Endothelial cell of umbilical vein (primary cell): ENCODE measurements at regions of chr9 and their contacts with region 1.

Region 1: DNA sequence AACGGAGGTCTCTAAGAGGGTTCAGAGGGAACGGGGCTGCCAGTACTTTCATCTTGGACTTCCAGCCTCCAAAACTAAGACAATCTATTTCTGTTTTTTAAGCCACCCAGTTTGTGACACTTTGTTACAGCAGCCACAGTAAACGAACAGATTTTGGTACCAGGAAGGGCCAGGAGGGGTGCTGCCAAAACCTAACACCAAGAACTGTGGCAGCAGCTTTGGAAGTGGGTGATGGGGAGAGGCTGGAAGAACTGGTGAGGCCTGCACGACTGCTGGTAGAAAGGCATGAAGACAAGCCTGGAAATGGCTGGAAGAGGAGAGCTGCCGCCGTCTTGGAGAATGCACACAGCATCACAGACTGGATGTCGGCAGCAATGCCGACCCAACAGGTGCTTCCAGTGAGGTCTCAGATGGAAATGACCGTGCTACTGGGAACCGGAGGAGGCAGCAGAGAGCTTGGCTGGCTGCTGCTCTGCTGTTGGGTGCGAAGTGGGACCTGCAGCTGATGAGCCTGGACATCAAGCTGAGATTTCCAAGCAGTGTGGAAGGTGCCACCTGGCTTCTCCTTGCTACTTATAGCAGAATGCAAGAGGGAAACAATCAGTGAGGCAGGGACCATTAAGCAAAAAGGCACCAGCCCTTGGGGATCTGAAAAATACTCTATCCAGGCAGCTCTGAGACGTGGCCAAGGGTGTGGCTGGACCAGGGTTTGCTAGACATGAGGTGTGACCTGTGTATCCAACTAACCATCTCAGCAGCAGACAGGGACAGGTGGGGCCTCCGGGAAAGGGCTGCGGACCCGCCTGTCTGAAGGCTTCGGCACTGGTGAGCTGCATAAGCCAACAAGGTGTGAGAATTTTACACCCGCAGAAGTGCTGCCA is 4.7 kb upstream of the TMEM210 start:
- DNase-seq: peak; percentile 20
- H3K4me3 ChIP-seq: no peak overlapping the region
- H3K27ac ChIP-seq: no peak overlapping the region
- H3K4me1 ChIP-seq: peaks cover 6% of the 10 kb centered on the region
- H3K27me3 ChIP-seq: no peaks in the 10 kb centered on the region
- CTCF ChIP-seq: peak; percentile 48 to 66
- POLR2A ChIP-seq: no peak

Region 2: GRCh38 chr9:137114610-137115391 is 61.7 kb before region 1 on chr9 and contains the start of gene DPP7:
- CTCF ChIA-PET with region 1: no interaction called
- POLR2A ChIA-PET with region 1: no interaction called
- dilution Hi-C with region 1: no loop called
- intact Hi-C with region 1: loop called (anchors 5 kb)
- DNase-seq: peak; percentile 33
- H3K4me3 ChIP-seq: peak within 1 kb of the TSS; percentile 32 to 61 (median 53)
- H3K27ac ChIP-seq: no peak within 1 kb of the TSS
- H3K4me1 ChIP-seq: peaks cover 4% of the 10 kb centered on the region
- H3K27me3 ChIP-seq: no peaks in the 10 kb centered on the region
- CTCF ChIP-seq: no peak
- POLR2A ChIP-seq: peak; percentile 35
- total RNA-seq, gene DPP7: 118 and 149 TPM in 2 replicates

Region 3: DNA sequence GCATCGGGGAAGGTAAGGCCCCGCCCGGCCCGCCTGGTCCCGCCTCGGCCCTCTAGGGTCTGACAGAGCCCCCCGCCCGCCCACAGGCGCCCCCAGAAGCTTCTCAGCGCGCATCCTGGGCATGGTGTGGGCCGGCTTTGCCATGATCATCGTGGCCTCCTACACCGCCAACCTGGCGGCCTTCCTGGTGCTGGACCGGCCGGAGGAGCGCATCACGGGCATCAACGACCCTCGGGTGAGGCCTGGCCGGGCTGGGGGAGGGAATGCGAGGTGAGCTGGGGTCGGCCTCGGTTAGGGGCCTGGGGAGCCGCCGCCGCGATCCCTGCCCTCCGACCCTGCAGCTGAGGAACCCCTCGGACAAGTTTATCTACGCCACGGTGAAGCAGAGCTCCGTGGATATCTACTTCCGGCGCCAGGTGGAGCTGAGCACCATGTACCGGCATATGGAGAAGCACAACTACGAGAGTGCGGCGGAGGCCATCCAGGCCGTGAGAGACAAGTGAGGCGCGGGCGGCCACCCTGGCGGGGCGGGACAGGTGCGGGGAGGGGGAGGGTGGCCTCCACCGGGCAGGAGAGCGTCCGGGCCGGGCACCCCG is 13.9 kb before region 1 on chr9:
- CTCF ChIA-PET with region 1: interaction called, 12 read pairs
- POLR2A ChIA-PET with region 1: no interaction called
- dilution Hi-C with region 1: no loop called
- intact Hi-C with region 1: no loop called
- DNase-seq: no peak
- H3K4me3 ChIP-seq: no peak overlapping the region
- H3K27ac ChIP-seq: no peak overlapping the region
- H3K4me1 ChIP-seq: peaks cover 3% of the 10 kb centered on the region
- H3K27me3 ChIP-seq: peaks cover 21 to 32% of the 10 kb centered on the region in 2 experiments
- CTCF ChIP-seq: no peak
- POLR2A ChIP-seq: no peak

Region 4: GRCh38 chr9:137188490-137189296 is 12.2 kb after region 1 on chr9 and contains the starts of genes ANAPC2 and SSNA1:
- CTCF ChIA-PET with region 1: interaction called, 13 read pairs
- POLR2A ChIA-PET with region 1: no interaction called
- dilution Hi-C with region 1: no loop called
- intact Hi-C with region 1: no loop called
- DNase-seq: peak; percentile 95
- H3K4me3 ChIP-seq: peak within 1 kb of the TSS; percentile 57 to 86 (median 64)
- H3K27ac ChIP-seq: peak within 1 kb of the TSS; percentile 48
- H3K4me1 ChIP-seq: peaks cover 17% of the 10 kb centered on the region
- H3K27me3 ChIP-seq: no peaks in the 10 kb centered on the region
- CTCF ChIP-seq: peak; percentile 32 to 40
- POLR2A ChIP-seq: peak; percentile 80
- total RNA-seq, gene ANAPC2: 69.2 and 70.0 TPM in 2 replicates
- total RNA-seq, gene SSNA1: 89.0 and 90.5 TPM in 2 replicates